ENCODE measurements at regions of chr12 and their contacts with region 1.

Region 1: DNA sequence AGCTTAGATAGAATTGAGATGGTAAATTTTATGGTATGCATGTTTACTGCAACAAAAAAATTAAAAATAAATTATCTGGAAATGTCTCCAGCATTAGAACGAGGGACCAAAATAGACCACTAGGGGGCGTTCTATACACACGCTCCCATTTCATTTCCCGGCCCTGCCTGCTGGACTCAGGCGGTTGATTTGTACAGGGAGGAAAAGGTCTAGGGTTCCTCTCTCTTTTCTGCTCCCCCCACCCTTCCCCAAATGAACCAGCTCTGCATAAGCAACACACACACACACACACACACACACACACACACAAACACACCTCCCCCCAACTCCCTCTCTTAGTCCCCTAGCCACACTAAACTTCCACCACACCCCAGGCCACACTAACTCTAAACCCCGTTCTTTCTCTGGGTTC is 7.8 kb upstream of the DTX1 start:
- DNase-seq: peak in 6 of 10 donors; percentile 44 to 91 (median 66)

Region 2: DNA sequence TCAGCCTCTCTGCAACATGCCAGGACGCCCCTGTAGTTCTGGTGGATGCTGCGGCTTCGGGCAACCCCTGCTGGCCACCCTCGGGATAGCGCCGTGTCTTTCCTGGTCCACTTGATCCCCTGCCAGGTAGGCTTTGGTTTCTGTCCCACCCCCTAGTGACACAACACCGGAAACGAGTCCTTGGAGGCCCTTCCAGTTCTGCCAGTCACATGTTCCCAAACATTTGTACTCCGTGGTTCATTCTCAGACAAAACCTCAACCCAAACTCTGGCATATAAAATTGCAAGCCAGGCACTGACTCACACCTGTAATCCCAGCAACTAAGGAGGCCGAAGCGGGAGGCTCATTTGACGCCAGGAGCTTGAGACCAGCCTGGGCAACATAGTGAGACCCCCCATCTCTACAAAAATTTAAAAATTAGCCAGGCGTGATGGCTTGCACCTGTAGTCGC is 49.7 kb after region 1 on chr12:
- intact Hi-C with region 1: loop called (anchors 2 kb)
- DNase-seq: peak; percentile 79 to 97 (median 86)

Region 3: GRCh38 chr12:113152835-113153814 is 104.4 kb after region 1 on chr12:
- intact Hi-C with region 1: loop called (anchors 1 kb)
- DNase-seq: peak; percentile 60 to 97 (median 78)

Region 4: DNA sequence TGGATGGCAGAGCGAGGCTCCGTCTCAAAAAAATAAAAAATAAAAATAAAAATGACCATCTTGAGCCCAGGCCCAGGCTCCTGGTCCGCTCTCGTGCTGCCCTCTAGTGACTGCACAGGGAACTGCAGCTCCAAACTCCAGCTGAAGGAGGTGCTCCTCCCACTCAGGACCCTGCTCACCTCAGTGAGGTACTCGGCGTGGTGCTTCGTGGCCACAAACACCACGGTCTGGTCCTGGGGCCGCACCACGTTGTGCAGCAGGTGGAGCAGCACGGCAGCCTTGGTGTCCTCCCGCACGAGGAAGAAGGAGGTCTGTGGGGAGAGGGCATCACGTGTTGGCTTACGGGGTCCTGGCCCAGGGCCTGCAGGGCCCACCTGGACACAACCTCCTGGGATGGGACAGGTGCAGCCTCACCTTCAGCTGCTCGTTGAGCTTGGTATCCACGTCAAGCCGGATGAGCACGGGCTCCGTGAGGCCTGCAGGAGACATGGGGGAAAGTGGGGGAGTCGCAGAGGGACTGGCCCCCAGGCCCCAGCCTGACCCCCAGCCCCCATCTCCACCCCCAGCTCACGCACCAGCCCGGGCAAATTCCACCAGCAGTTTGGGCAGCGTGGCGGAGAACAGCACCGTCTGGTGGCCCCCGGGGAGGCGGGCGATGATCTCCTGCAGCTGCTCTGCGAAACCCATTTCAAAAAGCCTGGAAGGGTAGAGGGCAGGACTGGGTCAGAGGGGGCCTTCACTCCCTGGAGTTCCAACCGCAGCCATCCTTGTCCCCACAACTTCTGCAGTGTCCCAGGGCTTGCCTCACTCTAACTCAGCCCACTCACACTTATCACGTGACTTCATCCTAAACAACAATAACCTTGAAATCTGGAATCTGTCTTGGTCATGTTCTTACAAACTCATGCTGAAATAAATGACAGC is 126.0 kb after region 1 on chr12:
- intact Hi-C with region 1: loop called (anchors 1 kb)
- DNase-seq: peak; percentile 65 to 96 (median 86)

Measured in posterior cingulate gyrus (tissue), 11 donors.